ENCODE measurements at regions of chr13 and their contacts with region 1.

Region 1: GRCh38 chr13:50531917-50532899 is 311.3 kb downstream of the DLEU7 start:
- DNase-seq: no peak
- H3K4me3 Mint-ChIP-seq: no peak overlapping the region
- H3K27ac Mint-ChIP-seq: no peak overlapping the region
- H3K4me1 Mint-ChIP-seq: peaks cover 11% of the 10 kb centered on the region
- H3K27me3 Mint-ChIP-seq: no peaks in the 10 kb centered on the region
- CTCF ChIP-seq: no peak

Region 2: DNA sequence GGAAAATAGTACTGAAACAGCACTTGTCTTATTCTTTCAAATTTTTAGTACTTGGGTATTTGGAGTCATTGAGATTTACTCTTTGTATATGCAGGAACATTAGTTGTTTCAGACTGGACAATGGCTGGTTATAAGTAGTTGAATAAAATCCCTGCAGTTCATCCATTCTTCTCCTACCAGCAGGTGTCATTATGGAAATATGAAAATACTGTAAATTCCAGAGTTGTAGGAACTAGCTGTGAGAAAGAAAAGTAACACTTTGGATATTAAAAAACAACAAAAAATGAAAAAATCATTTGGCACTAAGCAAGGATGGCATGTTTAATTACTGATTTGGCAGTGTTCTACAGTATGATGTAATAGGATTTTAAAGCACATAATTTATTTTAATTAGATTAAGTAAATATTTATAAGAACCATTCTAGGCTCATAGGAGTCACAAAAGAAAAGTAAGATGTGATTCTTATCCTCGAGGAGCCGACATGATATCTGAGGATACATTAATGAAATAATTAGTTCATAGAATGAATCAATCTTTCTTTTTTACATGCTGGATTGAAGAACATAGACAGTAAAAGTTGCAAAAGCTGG is 361.7 kb before region 1 on chr13:
- CTCF ChIA-PET with region 1: no interaction called
- intact Hi-C with region 1: loop called (anchors 1 kb)
- DNase-seq: no peak
- H3K4me3 Mint-ChIP-seq: no peak overlapping the region
- H3K27ac Mint-ChIP-seq: no peak overlapping the region
- H3K4me1 Mint-ChIP-seq: no peaks in the 10 kb centered on the region
- H3K27me3 Mint-ChIP-seq: no peaks in the 10 kb centered on the region
- CTCF ChIP-seq: no peak

Measured in Calu3 (cell line).